ENCODE measurements at regions of chr15 and their contacts with region 1.

Region 1: DNA sequence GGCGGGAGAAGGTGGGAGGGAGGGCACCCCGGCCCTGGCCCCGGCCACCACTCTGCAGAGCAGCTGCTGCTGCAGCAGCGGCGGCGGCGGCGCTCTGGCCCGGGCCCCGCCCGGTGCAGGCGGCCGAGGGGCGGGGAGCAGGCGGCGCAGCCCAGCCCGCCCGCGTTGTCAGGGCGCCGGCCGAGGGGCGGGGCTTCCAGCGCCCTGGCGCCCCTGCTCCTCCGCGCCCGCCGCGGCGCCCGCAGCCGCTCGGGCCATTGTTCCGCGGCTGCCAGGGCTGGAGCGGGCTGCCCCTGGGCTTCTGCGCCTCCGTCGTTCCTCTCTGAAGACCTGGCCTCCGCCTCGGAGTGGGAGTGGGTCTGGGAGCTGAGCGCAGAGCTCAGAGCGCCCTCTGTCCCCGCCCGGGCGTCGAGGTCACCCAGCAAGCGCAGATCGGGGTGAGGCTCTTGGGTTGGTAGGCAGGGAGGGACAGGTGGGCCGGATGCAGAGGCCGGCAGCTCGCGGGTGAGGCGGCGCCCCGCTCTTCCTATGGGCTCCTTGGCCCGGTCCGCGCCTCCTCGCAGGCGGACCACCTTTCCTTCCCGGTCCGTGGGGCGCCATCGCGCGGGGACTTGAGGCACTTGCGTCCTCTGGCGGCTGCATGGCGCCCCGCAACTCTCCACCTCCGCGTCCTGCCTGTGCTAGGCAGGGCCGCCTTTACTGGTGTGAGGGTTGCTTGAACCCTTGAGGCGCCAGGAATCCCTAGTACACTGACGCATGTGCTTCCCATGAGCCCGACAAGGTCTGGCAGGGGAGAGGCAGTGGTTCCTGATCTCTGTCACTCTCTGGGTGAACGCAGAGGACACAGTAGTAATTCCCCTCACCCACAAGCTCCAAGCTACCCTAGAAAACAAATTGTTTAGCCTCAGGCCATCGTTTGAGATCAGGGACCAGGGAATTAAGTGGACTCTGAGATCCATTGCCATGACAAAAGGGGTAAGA is at the start of gene LPCAT4:
- DNase-seq: peak; percentile 85 to 94 (median 90)
- H3K4me3 ChIP-seq: peak within 1 kb of the TSS; percentile 79
- H3K4me3 Mint-ChIP-seq: peak within 1 kb of the TSS; percentile 90 to 98 (median 95)
- H3K27ac ChIP-seq: peak within 1 kb of the TSS; percentile 75
- H3K27ac Mint-ChIP-seq: peak within 1 kb of the TSS; percentile 93 to 98 (median 96)
- H3K4me1 ChIP-seq: peaks cover 25% of the 10 kb centered on the region
- H3K4me1 Mint-ChIP-seq: peaks cover 31 to 51% (median 42%) of the 10 kb centered on the region in 3 donors
- H3K27me3 ChIP-seq: no peaks in the 10 kb centered on the region
- H3K27me3 Mint-ChIP-seq: no peaks in the 10 kb centered on the region
- total RNA-seq, gene LPCAT4: 49.5 to 57.4 TPM

Region 2: DNA sequence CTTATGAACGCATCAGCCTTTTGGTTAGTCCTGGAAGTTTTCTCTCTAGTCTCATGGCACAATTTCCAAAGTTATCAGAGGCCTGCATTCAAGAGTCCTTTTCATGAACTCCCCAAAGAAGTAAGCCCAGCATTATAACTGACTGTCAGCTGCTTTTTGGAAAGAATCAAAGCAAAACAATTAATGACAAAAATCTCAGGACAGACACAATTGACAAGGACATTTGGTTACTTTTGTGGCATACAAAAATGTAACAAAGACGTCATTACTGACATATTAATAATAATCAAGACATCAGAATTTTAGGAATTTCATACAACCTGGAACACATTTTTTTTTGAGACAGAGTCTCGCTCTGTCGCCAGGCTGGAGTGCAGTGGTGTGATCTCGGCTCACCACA is 178.7 kb before region 1 on chr15:
- CTCF ChIA-PET with region 1: no interaction called
- POLR2A ChIA-PET with region 1: no interaction called
- DNase-seq: no peak
- H3K4me3 ChIP-seq: no peak overlapping the region
- H3K4me3 Mint-ChIP-seq: no peak overlapping the region
- H3K27ac ChIP-seq: no peak overlapping the region
- H3K27ac Mint-ChIP-seq: peak overlapping the region in 1 of 8 donors; percentile 53
- H3K4me1 ChIP-seq: no peaks in the 10 kb centered on the region
- H3K4me1 Mint-ChIP-seq: peaks cover 15 to 46% (median 32%) of the 10 kb centered on the region in 3 donors
- H3K27me3 ChIP-seq: no peaks in the 10 kb centered on the region
- H3K27me3 Mint-ChIP-seq: no peaks in the 10 kb centered on the region

Region 3: GRCh38 chr15:34209421-34210282 is 157.7 kb before region 1 on chr15 and contains the start of gene KATNBL1:
- CTCF ChIA-PET with region 1: interaction called, 18 read pairs
- POLR2A ChIA-PET with region 1: interaction called, 3 read pairs
- DNase-seq: peak; percentile 87 to 97 (median 95)
- H3K4me3 ChIP-seq: peak within 1 kb of the TSS; percentile 57
- H3K4me3 Mint-ChIP-seq: peak within 1 kb of the TSS; percentile 86 to 95 (median 91)
- H3K27ac ChIP-seq: peak within 1 kb of the TSS; percentile 52
- H3K27ac Mint-ChIP-seq: peak within 1 kb of the TSS; percentile 57 to 94 (median 86)
- H3K4me1 ChIP-seq: peaks cover 14% of the 10 kb centered on the region
- H3K4me1 Mint-ChIP-seq: peaks cover 17 to 35% (median 35%) of the 10 kb centered on the region in 3 donors
- H3K27me3 ChIP-seq: no peaks in the 10 kb centered on the region
- H3K27me3 Mint-ChIP-seq: no peaks in the 10 kb centered on the region
- total RNA-seq, gene KATNBL1: 42.2 to 43.8 TPM

Region 4: DNA sequence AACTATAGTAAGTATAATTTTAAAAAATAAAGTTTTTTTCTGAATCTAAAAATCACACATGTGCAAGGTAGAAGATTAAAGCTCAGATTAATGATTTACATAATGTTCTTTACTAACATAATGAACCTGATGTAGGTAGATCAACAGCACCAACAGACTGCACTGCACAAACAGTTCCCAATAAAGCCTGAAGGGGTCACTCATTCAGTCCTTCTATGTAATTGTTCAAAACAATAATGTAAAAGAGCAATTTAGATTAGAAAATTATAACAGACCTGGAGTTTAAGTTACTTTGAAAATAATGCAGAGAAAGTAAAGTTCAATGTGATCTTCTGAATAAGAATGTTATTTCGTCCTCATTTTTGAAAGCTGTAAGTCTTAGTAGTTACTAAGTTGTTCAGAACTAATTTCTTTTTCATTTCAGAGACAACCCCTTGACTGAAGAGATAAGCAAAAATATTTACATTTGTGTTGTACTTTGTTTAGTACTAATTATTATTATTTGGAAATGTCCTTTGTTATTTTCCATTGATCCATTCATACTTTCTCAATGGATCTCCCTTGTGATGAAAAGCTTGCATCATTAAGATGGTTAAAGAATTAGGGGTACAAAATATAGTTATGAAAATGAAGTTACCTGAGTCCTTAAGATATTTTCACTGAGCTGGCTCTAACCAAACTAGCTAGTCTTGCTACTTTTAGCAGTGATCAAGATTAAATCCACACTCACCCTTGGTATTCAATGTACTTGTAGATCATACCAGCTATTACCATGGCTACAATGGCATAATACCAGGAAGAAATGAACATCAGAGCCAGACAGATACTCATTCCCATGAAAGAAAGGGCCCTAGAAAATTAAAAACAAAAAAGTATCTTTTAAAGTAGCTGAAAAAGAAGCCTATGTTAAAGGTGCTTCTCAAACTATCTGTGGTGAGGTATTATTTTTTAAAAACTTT is 125.7 kb before region 1 on chr15:
- CTCF ChIA-PET with region 1: interaction called, 59 read pairs
- POLR2A ChIA-PET with region 1: interaction called, 3 read pairs
- DNase-seq: peak in 3 of 5 donors; percentile 35 to 51 (median 45)
- H3K4me3 ChIP-seq: no peak overlapping the region
- H3K4me3 Mint-ChIP-seq: no peak overlapping the region
- H3K27ac ChIP-seq: no peak overlapping the region
- H3K27ac Mint-ChIP-seq: peak overlapping the region in 2 of 8 donors; percentile 2 to 5
- H3K4me1 ChIP-seq: no peaks in the 10 kb centered on the region
- H3K4me1 Mint-ChIP-seq: peaks cover 0 to 2% (median 0%) of the 10 kb centered on the region in 3 donors
- H3K27me3 ChIP-seq: no peaks in the 10 kb centered on the region
- H3K27me3 Mint-ChIP-seq: no peaks in the 10 kb centered on the region

Region 5: GRCh38 chr15:34271493-34271892 is 95.9 kb before region 1 on chr15:
- CTCF ChIA-PET with region 1: no interaction called
- POLR2A ChIA-PET with region 1: no interaction called
- DNase-seq: no peak
- H3K4me3 ChIP-seq: no peak overlapping the region
- H3K4me3 Mint-ChIP-seq: no peak overlapping the region
- H3K27ac ChIP-seq: no peak overlapping the region
- H3K27ac Mint-ChIP-seq: peak overlapping the region in 1 of 8 donors; percentile 93
- H3K4me1 ChIP-seq: no peaks in the 10 kb centered on the region
- H3K4me1 Mint-ChIP-seq: peaks cover 0 to 6% (median 2%) of the 10 kb centered on the region in 3 donors
- H3K27me3 ChIP-seq: no peaks in the 10 kb centered on the region
- H3K27me3 Mint-ChIP-seq: no peaks in the 10 kb centered on the region

Region 6: DNA sequence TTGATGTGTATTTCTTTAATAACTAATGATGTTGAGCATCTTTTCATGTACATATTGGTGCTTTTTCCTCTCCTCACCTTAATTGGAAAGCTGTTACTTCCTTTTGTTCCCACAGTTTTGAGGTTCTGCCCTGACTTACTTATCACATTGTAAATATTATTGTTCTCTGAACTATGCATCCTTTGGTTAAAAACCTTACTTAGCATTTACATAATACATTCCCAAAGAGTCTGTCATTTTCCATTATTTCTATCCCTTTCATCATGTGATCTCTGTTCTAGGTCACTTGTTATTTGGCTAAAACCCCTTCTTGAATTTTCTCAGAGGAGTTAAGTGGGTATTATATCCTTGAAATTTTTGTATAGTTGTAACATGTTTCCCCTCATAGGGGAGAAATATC is 62.8 kb before region 1 on chr15:
- CTCF ChIA-PET with region 1: no interaction called
- POLR2A ChIA-PET with region 1: no interaction called
- DNase-seq: no peak
- H3K4me3 ChIP-seq: no peak overlapping the region
- H3K4me3 Mint-ChIP-seq: no peak overlapping the region
- H3K27ac ChIP-seq: no peak overlapping the region
- H3K27ac Mint-ChIP-seq: peak overlapping the region in 1 of 8 donors; percentile 2
- H3K4me1 ChIP-seq: no peaks in the 10 kb centered on the region
- H3K4me1 Mint-ChIP-seq: peaks cover 15 to 39% (median 26%) of the 10 kb centered on the region in 3 donors
- H3K27me3 ChIP-seq: no peaks in the 10 kb centered on the region
- H3K27me3 Mint-ChIP-seq: no peaks in the 10 kb centered on the region

Region 7: DNA sequence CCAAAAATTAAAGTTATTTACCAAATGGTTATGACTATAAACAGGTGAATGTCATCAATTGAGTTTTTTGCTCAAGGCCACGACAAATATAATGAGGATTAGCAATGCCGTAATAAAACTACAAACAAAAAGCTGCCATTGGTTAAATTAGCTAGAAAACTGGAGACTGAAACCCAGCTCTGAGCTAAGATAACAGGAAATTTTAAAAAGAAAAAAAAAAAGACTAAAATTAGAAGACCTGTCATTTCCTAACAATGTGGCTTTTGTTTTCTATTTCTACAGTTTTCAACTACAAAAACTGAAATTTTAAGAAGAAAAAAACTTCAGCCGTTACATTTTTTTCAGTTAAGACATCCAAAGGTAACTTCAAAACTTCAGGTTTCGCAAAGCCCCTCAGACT is 39.5 kb before region 1 on chr15:
- CTCF ChIA-PET with region 1: interaction called, 28 read pairs
- POLR2A ChIA-PET with region 1: interaction called, 8 read pairs
- DNase-seq: no peak
- H3K4me3 ChIP-seq: peak overlapping the region; percentile 18
- H3K4me3 Mint-ChIP-seq: peak overlapping the region in 3 of 7 donors; percentile 7 to 51 (median 49)
- H3K27ac ChIP-seq: no peak overlapping the region
- H3K27ac Mint-ChIP-seq: peak overlapping the region in 5 of 8 donors; percentile 11 to 59 (median 40)
- H3K4me1 ChIP-seq: peaks cover 54% of the 10 kb centered on the region
- H3K4me1 Mint-ChIP-seq: peaks cover 44 to 72% (median 71%) of the 10 kb centered on the region in 3 donors
- H3K27me3 ChIP-seq: no peaks in the 10 kb centered on the region
- H3K27me3 Mint-ChIP-seq: no peaks in the 10 kb centered on the region

Region 8: GRCh38 chr15:34342737-34343575 is 24.4 kb before region 1 on chr15 and contains the starts of genes NOP10 and NUTM1:
- CTCF ChIA-PET with region 1: interaction called, 60 read pairs
- POLR2A ChIA-PET with region 1: interaction called, 42 read pairs
- DNase-seq: peak; percentile 90 to 94 (median 93)
- H3K4me3 ChIP-seq: peak within 1 kb of the TSS; percentile 82
- H3K4me3 Mint-ChIP-seq: peak within 1 kb of the TSS in 1 of 7 donors; percentile 75
- H3K27ac ChIP-seq: peak within 1 kb of the TSS; percentile 79
- H3K27ac Mint-ChIP-seq: peak within 1 kb of the TSS in 6 of 8 donors; percentile 83 to 92 (median 88)
- H3K4me1 ChIP-seq: peaks cover 19% of the 10 kb centered on the region
- H3K4me1 Mint-ChIP-seq: peaks cover 21 to 26% (median 24%) of the 10 kb centered on the region in 3 donors
- H3K27me3 ChIP-seq: no peaks in the 10 kb centered on the region
- H3K27me3 Mint-ChIP-seq: no peaks in the 10 kb centered on the region
- total RNA-seq, gene NOP10: 284 to 292 TPM
- total RNA-seq, gene NUTM1: not detected

Region 9: DNA sequence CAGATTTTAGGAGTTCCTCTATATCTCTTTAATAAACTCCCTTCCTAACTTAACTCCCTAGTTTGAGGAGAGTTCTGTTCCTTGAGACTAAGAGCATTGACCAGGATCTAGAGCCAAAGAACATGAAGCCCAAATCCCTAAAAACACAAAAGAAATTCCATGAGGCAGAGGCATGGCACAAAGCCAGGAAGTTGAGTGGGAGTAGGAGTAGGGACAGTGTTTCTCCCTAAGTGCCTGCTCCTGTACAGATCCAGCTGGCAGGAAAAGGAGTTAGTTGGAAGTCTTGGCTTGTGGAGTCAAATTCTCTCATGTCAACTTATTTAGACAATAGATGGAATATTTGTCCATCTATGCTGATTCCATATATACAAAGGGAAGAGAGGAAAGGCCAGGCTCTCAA is 416.6 kb after region 1 on chr15:
- CTCF ChIA-PET with region 1: no interaction called
- POLR2A ChIA-PET with region 1: no interaction called
- DNase-seq: no peak
- H3K4me3 ChIP-seq: no peak overlapping the region
- H3K4me3 Mint-ChIP-seq: no peak overlapping the region
- H3K27ac ChIP-seq: no peak overlapping the region
- H3K27ac Mint-ChIP-seq: no peak overlapping the region
- H3K4me1 ChIP-seq: no peaks in the 10 kb centered on the region
- H3K4me1 Mint-ChIP-seq: no peaks in the 10 kb centered on the region
- H3K27me3 ChIP-seq: no peaks in the 10 kb centered on the region
- H3K27me3 Mint-ChIP-seq: peaks cover 11 to 34% of the 10 kb centered on the region in 2 donors